A549 (cell line): ENCODE measurements at regions of chr17 and their contacts with region 1.

Region 1: DNA sequence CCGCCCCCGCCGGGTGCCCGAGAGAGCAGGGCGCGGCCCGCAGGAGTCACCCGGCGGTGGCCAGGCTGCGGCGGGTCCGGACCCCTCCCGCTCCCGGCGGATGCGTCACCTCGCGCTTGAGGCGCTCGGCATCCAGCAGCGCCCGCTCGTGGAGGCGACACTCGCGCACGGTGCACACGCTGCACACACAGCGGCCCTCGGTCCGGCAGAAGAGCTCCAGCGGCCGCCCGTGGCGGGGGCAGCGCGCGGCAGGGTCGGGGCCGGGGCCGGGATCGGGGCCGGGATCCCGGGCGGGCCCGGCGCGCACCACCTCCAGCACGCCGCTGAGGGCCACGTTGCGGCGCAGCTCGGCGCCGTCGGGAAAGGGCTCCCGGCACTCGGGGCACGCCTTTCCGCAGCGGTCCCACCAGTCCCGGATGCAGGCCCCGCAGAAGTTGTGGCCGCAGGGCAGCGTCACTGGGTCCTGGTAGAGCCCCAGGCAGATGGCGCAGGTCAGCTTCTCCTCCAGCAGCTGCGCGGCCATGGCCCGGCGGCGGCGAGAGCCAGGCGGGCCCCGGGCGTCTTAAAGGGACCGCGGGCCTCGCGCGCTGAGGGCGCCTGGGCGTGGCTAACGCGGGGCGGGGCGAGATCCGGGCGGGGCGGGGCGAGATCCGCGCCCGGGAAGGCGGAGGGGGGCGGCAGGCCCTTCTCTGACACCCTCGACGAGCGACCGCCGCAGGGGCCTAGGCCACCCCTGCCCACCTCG is at the start of gene TRIM65:
- DNase-seq: peak; percentile 69 to 83
- ATAC-seq: peak; percentile 76 to 80
- H3K4me3 ChIP-seq: peak within 1 kb of the TSS; percentile 84
- H3K27ac ChIP-seq: peak within 1 kb of the TSS; percentile 90 to 97
- H3K4me1 ChIP-seq: peaks cover 17% of the 10 kb centered on the region
- CTCF ChIP-seq: peak; percentile 59
- EP300 ChIP-seq: no peak
- POLR2A ChIP-seq: peak; percentile 95
- RAD21 ChIP-seq: peak; percentile 12 to 54; a peak in 3 of 5 replicates
- polyA plus RNA-seq, gene TRIM65: 13.5 and 17.4 TPM in 2 replicates

Region 2: GRCh38 chr17:75313941-75314551 is 582.5 kb before region 1 on chr17:
- CTCF ChIA-PET with region 1: no interaction called
- POLR2A ChIA-PET with region 1: no interaction called
- DNase-seq: no peak
- ATAC-seq: peak in 1 of 2 experiments; percentile 11; a peak in 1 of 6 replicates
- H3K4me3 ChIP-seq: no peak overlapping the region
- H3K27ac ChIP-seq: no peak overlapping the region
- H3K4me1 ChIP-seq: peaks cover 10% of the 10 kb centered on the region
- CTCF ChIP-seq: no peak
- EP300 ChIP-seq: no peak
- POLR2A ChIP-seq: no peak
- RAD21 ChIP-seq: no peak

Region 3: DNA sequence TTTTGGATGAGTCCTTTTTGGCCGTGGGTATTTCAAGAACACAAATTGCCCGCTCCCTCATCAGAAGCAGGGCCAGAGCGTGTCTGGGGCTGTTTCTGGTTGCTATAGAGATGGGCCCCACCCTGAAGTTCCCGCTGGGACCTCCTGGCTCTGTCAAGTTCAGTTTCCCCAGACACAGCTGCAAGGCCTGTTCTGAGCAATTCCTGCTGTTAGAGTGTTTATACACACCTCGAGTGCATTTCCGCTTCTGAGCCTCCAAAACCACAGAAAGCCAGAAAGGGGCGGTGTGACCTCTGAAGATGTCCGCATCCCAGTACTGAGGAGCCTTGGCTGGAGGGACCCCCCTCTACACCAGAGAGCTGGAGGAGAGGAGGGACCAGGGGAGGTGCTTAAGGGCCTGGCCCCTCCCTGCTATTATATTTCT is 32.1 kb before region 1 on chr17:
- CTCF ChIA-PET with region 1: interaction called, 513 read pairs
- POLR2A ChIA-PET with region 1: no interaction called
- DNase-seq: no peak
- ATAC-seq: peak; percentile 23 to 28; a peak in 3 of 6 replicates
- H3K4me3 ChIP-seq: no peak overlapping the region
- H3K27ac ChIP-seq: no peak overlapping the region
- H3K4me1 ChIP-seq: peaks cover 10% of the 10 kb centered on the region
- CTCF ChIP-seq: no peak
- EP300 ChIP-seq: no peak
- POLR2A ChIP-seq: no peak
- RAD21 ChIP-seq: no peak

Region 4: GRCh38 chr17:76022285-76022684 is 125.7 kb after region 1 on chr17:
- CTCF ChIA-PET with region 1: no interaction called
- POLR2A ChIA-PET with region 1: no interaction called
- DNase-seq: no peak
- ATAC-seq: no peak
- H3K4me3 ChIP-seq: no peak overlapping the region
- H3K27ac ChIP-seq: no peak overlapping the region
- H3K4me1 ChIP-seq: peaks cover 10% of the 10 kb centered on the region; the same call in 2 of the 3 replicates
- CTCF ChIP-seq: no peak
- EP300 ChIP-seq: no peak
- POLR2A ChIP-seq: no peak
- RAD21 ChIP-seq: no peak